ENCODE measurements at regions of chr5 and their contacts with region 1.

Region 1: DNA sequence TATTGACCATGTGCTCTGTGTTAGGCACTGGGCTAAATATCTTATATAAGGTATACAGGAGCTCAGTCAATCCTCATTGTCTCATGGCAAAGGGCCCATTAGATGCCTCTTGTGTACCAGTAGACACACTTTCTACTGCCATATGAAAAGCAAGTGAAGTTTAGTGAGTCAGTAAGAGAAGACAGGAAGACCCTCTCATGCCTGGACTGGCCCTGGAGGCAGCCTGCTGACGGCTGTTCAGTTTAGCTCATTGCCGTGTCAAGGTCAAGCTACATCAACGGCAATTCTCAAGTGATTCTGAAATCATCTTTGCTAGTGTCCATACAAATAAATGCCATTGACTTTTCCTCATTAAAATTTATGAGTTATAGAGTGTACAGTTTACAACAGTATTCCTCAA is 237.9 kb downstream of the IRX1 start:
- DNase-seq: no peak
- H3K4me3 ChIP-seq: no peak overlapping the region
- H3K27ac ChIP-seq: no peak overlapping the region
- H3K4me1 ChIP-seq: peaks cover 6% of the 10 kb centered on the region
- H3K27me3 ChIP-seq: no peaks in the 10 kb centered on the region
- CTCF ChIP-seq: no peak

Region 2: DNA sequence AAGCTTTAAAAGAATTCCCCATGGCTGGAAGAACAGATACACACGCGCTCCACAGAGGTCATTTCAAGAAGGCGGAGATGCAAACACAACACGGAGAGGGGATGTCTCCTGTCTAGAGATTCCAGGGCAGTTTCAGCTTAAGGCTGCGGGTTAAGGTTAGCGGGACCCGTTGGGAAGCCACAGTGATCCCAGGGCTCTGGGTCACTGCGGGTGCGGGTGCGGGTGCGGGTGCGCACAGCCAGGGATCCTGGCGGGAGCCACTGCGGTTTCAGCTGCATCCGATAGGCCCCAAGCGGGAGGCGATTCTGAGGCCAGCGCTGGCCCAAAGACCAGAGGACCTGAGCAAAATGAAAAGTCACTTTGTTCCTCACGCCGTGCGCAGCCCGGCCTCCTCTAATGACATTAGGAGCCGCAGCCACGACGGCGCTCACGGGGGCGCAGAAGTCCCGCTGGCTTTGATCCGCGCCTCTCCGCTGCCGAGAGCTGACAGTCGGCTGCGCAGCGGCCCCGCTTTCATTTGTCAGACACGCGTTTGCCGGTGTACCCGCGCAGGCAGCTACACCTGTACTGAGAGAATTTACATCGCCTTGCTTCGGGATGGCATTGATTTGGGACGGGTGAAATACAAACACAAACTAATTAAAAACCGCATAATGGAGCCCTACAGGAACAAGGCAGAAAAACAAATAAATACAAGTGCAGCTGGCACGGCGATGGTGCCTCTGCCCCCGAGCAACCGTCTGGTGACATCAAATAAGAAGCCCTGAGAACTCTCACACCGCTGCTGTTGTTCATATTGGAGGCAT is 243.2 kb before region 1 on chr5:
- CTCF ChIA-PET with region 1: no interaction called
- dilution Hi-C with region 1: no loop called
- in situ Hi-C with region 1: no loop called
- intact Hi-C with region 1: no loop called
- DNase-seq: no peak
- H3K4me3 ChIP-seq: no peak overlapping the region
- H3K27ac ChIP-seq: no peak overlapping the region
- H3K4me1 ChIP-seq: peaks cover 14% of the 10 kb centered on the region
- H3K27me3 ChIP-seq: no peaks in the 10 kb centered on the region
- CTCF ChIP-seq: no peak

Region 3: DNA sequence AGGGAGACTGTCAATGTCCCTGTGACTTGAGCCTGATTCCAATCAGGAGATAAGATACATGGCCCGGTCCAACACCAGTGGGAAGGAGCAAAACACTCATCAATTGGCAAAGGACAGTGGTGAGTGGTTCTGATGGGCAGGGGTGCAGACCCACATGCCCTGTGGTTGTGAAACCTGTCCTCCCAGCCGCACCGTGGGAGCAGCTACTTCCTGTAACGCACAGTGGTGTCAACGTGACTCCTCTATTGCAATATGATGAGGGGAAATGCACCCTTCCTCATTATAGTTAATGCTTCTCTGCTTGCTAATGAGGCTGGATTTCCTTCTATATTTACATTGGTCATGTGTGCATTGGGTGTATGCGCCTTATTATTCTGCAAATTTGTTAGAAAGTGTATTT is 14.9 kb before region 1 on chr5:
- CTCF ChIA-PET with region 1: no interaction called
- dilution Hi-C with region 1: no loop called
- in situ Hi-C with region 1: no loop called
- intact Hi-C with region 1: no loop called
- DNase-seq: no peak
- H3K4me3 ChIP-seq: no peak overlapping the region
- H3K27ac ChIP-seq: no peak overlapping the region
- H3K4me1 ChIP-seq: no peaks in the 10 kb centered on the region
- H3K27me3 ChIP-seq: no peaks in the 10 kb centered on the region
- CTCF ChIP-seq: no peak

Region 4: GRCh38 chr5:3886524-3887451 is 53.2 kb after region 1 on chr5:
- CTCF ChIA-PET with region 1: no interaction called
- dilution Hi-C with region 1: loop called (anchors 5 kb)
- in situ Hi-C with region 1: no loop called
- intact Hi-C with region 1: no loop called
- DNase-seq: peak; percentile 24
- H3K4me3 ChIP-seq: no peak overlapping the region
- H3K27ac ChIP-seq: no peak overlapping the region
- H3K4me1 ChIP-seq: peaks cover 13% of the 10 kb centered on the region
- H3K27me3 ChIP-seq: no peaks in the 10 kb centered on the region
- CTCF ChIP-seq: no peak